Colonic mucosa (tissue), 4 donors: ENCODE measurements at regions of chr1 and their contacts with region 1.

Region 1: DNA sequence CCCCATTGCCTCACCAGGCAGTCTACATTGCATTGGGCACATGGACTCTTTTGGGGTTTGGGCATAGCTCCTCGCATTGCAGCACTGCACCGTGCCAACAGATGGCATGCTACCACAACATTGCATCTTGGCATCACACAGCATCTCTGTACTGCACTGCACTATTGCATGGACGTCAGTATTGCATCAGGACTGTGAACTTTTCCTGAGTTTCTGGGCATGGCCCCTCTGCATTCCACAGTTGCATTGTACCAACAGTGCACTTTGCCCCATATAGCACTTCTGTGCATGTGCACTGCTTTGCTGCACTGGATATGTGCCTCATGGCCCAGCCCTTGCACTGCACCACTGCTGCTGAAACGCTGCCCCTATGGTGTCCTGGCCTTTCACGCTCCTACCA is 9.6 kb downstream of the PTPRU start:
- DNase-seq: no peak
- H3K4me3 ChIP-seq: no peak overlapping the region
- H3K27ac ChIP-seq: no peak overlapping the region
- H3K4me1 ChIP-seq: no peaks in the 10 kb centered on the region
- H3K27me3 ChIP-seq: no peaks in the 10 kb centered on the region
- CTCF ChIP-seq: peak; percentile 47

Region 2: GRCh38 chr1:29341936-29342335 is 96.1 kb after region 1 on chr1:
- intact Hi-C with region 1: loop called (anchors 5 kb)
- DNase-seq: no peak
- H3K4me3 ChIP-seq: no peak overlapping the region
- H3K27ac ChIP-seq: no peak overlapping the region
- H3K4me1 ChIP-seq: no peaks in the 10 kb centered on the region
- H3K27me3 ChIP-seq: no peaks in the 10 kb centered on the region
- CTCF ChIP-seq: no peak

Region 3: GRCh38 chr1:29439615-29440014 is 193.7 kb after region 1 on chr1:
- intact Hi-C with region 1: no loop called
- DNase-seq: no peak
- H3K4me3 ChIP-seq: no peak overlapping the region
- H3K27ac ChIP-seq: no peak overlapping the region
- H3K4me1 ChIP-seq: no peaks in the 10 kb centered on the region
- H3K27me3 ChIP-seq: no peaks in the 10 kb centered on the region
- CTCF ChIP-seq: no peak

Region 4: GRCh38 chr1:29453502-29454240 is 207.8 kb after region 1 on chr1:
- intact Hi-C with region 1: loop called (anchors 10 kb)
- DNase-seq: peak; percentile 22
- H3K4me3 ChIP-seq: no peak overlapping the region
- H3K27ac ChIP-seq: no peak overlapping the region
- H3K4me1 ChIP-seq: no peaks in the 10 kb centered on the region
- H3K27me3 ChIP-seq: no peaks in the 10 kb centered on the region
- CTCF ChIP-seq: no peak

Region 5: DNA sequence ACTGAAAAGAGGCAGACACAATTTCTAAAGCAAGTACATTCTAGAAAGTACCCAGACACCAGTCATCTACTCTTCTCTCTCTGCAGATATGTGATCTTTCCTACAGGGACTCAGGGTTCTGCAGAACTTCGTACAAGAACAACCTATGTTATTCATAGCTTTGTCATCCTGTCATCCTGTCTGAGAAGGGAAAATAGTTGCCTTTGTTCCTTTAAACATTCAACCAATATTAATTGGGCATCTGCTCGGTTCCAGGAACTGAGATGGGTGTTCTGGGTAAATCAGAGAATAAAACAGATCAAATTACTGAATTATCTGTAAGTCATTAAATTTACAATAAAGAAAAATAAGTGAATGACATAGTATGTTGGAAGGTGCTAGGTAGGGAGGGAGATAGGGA is 972.6 kb after region 1 on chr1:
- intact Hi-C with region 1: no loop called
- DNase-seq: no peak
- H3K4me3 ChIP-seq: no peak overlapping the region
- H3K27ac ChIP-seq: no peak overlapping the region
- H3K4me1 ChIP-seq: no peaks in the 10 kb centered on the region
- H3K27me3 ChIP-seq: no peaks in the 10 kb centered on the region
- CTCF ChIP-seq: no peak